Heart right ventricle (tissue), 16 donors: ENCODE measurements at regions of chr6 and their contacts with region 1.

Region 1: DNA sequence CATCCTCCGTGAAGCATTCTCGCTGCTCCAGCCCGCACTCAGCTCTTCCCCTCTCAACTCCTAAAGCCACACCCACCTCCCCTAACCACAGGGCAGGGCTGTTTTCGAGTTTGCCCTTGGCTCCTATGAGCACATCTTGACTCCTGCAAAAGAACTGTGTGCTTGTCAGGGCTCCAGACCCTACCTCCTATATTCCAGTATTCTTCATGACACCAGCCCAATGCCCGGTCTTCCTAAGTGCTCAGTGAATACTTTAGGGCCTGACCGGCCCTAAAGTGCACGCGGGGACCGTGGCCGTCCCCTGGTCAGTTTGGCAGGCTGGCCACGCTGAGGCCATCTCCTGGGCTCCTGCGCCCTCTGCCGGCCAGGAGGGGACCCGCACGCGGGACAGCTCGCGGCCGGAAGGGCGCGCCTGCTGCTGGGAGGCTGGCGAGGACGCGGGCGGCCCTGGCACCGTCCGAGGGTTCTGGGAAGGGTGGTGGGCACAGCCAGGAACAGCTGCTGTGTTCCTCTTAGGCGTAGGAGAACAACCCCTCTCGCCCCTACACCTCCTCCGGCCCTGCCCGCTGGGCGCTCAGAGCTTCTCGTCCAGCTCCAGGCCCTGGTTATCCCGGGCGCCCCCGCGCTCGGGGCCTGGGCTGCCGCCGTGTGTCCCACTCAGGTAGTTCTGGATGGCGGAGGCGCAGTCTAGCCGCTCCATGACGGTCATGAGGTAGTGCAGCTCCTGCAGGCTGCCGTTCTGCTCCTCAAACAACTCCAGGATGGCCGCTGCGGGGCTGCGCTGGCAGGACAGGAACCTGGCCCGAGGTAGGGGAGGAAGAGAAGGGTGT is 11.0 kb downstream of the UNC5CL start:
- DNase-seq: peak; percentile 81 to 90
- ATAC-seq: peak; percentile 95 to 97 (median 96)
- H3K4me3 ChIP-seq: peak overlapping the region; percentile 40 to 66 (median 60)
- H3K27ac ChIP-seq: peak overlapping the region; percentile 27 to 86 (median 78)
- H3K4me1 ChIP-seq: peaks cover 3 to 26% (median 10%) of the 10 kb centered on the region in 9 donors
- H3K27me3 ChIP-seq: no peaks in the 10 kb centered on the region
- CTCF ChIP-seq: peak; percentile 93 to 100 (median 100)

Region 2: GRCh38 chr6:39361657-39362486 is 1666.1 kb before region 1 on chr6:
- intact Hi-C with region 1: loop called in 3 of 10 experiments (anchors 10 kb)
- DNase-seq: peak; percentile 48 to 56
- ATAC-seq: peak; percentile 65 to 87 (median 80)
- H3K4me3 ChIP-seq: no peak overlapping the region
- H3K27ac ChIP-seq: no peak overlapping the region
- H3K4me1 ChIP-seq: peaks cover 0 to 15% (median 6%) of the 10 kb centered on the region in 9 donors
- H3K27me3 ChIP-seq: no peaks in the 10 kb centered on the region
- CTCF ChIP-seq: peak; percentile 68 to 84 (median 78)

Region 3: GRCh38 chr6:40328405-40328987 is 699.5 kb before region 1 on chr6:
- intact Hi-C with region 1: loop called in 1 of 10 experiments (anchors 10 kb)
- DNase-seq: no peak
- ATAC-seq: peak in 3 of 8 donors; percentile 50 to 61 (median 54)
- H3K4me3 ChIP-seq: no peak overlapping the region
- H3K27ac ChIP-seq: no peak overlapping the region
- H3K4me1 ChIP-seq: peaks cover 0 to 20% (median 6%) of the 10 kb centered on the region in 9 donors
- H3K27me3 ChIP-seq: peaks cover 0 to 63% (median 33%) of the 10 kb centered on the region in 7 donors
- CTCF ChIP-seq: peak in 8 of 9 donors; percentile 31 to 63 (median 48)

Region 4: GRCh38 chr6:40894962-40895799 is 132.8 kb before region 1 on chr6:
- intact Hi-C with region 1: loop called in 8 of 10 experiments (anchors 1 to 5 kb)
- DNase-seq: peak; percentile 56 to 67
- ATAC-seq: peak; percentile 53 to 88 (median 83)
- H3K4me3 ChIP-seq: no peak overlapping the region
- H3K27ac ChIP-seq: peak overlapping the region in 6 of 10 donors; percentile 8 to 92 (median 44)
- H3K4me1 ChIP-seq: peaks cover 0 to 36% (median 18%) of the 10 kb centered on the region in 9 donors
- H3K27me3 ChIP-seq: no peaks in the 10 kb centered on the region
- CTCF ChIP-seq: peak; percentile 24 to 70 (median 58)

Region 5: DNA sequence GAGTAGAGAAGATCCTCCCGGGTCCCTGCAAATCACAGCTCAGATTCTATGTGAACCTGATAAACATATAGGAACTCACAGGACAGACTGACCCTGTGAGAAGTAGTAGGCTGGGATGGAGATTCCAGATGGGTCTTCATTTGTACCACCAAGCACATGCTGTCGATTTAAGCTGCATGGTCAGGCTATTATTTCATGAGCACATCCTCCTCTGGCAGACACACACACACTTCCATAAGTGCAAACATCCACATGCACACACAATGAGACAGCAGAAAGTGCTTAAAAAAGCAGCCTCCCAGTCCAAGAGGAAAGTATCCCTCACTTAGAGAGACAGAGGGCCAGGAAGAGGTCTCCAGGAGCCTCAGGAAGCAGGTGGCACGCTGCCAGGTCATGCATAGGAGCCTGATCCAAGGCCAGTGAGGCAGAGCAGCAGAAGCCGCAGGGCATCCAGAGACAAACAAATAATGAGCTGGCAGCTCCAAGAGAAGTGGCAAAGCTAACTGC is 120.8 kb before region 1 on chr6:
- intact Hi-C with region 1: no loop called
- DNase-seq: peak; percentile 9 to 33
- ATAC-seq: peak in 4 of 8 donors; percentile 24 to 57 (median 28)
- H3K4me3 ChIP-seq: no peak overlapping the region
- H3K27ac ChIP-seq: peak overlapping the region in 5 of 10 donors; percentile 9 to 46 (median 23)
- H3K4me1 ChIP-seq: peaks cover 0 to 32% (median 7%) of the 10 kb centered on the region in 9 donors
- H3K27me3 ChIP-seq: no peaks in the 10 kb centered on the region
- CTCF ChIP-seq: no peak

Region 6: GRCh38 chr6:41066867-41067304 is 38.9 kb after region 1 on chr6:
- intact Hi-C with region 1: loop called in 4 of 10 experiments (anchors 2 to 5 kb)
- DNase-seq: peak; percentile 43 to 69
- ATAC-seq: no peak
- H3K4me3 ChIP-seq: no peak overlapping the region
- H3K27ac ChIP-seq: peak overlapping the region in 1 of 10 donors; percentile 21
- H3K4me1 ChIP-seq: peaks cover 0 to 53% (median 33%) of the 10 kb centered on the region in 9 donors
- H3K27me3 ChIP-seq: no peaks in the 10 kb centered on the region
- CTCF ChIP-seq: peak; percentile 80 to 90 (median 87)